ENCODE measurements at regions of chr11 and their contacts with region 1.

Region 1: DNA sequence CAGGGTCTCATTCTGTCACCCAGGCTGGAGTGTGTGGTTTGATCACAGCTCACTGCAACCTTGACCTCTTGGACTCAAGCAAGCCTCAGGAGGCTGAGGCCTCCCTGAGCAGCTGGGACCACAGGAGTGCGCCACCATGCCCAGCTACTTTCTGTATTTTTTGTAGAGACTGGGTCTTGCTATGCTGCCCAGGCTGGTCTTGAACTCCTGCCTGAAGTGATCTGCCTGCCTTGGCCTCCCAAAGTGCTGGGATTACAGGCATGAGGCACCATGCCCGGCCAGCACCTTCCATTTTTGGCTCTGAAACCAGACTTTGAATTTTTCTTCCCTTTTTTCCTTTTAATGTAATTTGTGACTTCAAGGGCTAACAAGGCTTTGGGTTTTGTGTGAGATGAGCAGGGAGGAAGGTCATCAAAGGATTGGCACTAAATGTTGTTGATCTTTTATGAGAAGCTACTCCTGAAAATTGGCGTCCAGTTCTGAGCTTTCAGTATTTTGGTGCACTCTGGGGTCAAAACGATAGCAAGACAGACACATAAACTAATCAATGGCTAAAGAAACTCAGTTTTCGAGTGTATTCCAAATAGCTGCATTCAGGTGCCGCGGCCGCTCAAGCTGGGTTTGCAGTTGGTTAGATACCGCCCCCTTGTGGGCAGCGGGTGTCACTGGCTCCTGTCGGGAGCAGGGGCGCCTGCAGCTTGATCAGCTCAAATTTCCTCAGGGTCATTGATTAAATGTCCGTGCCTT is 51.9 kb upstream of the CLMP start:
- DNase-seq: peak; percentile 85
- H3K4me3 ChIP-seq: no peak overlapping the region
- H3K27ac ChIP-seq: no peak overlapping the region
- H3K4me1 ChIP-seq: peaks cover 27% of the 10 kb centered on the region
- CTCF ChIP-seq: peak; percentile 99

Region 2: DNA sequence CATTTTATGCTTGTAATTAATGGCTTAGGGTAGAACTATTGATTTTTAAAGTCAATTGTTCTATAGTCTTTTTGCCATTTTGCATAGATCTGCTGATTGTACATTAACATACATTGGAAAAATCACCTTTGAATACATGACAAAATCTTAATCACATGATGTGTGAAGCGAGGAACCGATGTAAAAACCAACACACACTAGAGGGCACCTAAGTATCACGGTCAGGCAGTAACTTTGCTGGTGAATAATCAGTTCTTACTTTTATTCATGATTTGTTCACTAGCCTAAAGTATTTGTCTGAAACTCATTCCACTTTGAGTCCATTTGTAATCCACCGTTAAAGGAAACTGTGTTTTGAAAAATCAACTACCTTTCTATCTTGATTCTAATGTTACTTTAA is 336.1 kb before region 1 on chr11:
- CTCF ChIA-PET with region 1: no interaction called
- POLR2A ChIA-PET with region 1: no interaction called
- intact Hi-C with region 1: no loop called
- DNase-seq: no peak
- H3K4me3 ChIP-seq: no peak overlapping the region
- H3K27ac ChIP-seq: no peak overlapping the region
- H3K4me1 ChIP-seq: no peaks in the 10 kb centered on the region
- CTCF ChIP-seq: peak; percentile 58

Region 3: DNA sequence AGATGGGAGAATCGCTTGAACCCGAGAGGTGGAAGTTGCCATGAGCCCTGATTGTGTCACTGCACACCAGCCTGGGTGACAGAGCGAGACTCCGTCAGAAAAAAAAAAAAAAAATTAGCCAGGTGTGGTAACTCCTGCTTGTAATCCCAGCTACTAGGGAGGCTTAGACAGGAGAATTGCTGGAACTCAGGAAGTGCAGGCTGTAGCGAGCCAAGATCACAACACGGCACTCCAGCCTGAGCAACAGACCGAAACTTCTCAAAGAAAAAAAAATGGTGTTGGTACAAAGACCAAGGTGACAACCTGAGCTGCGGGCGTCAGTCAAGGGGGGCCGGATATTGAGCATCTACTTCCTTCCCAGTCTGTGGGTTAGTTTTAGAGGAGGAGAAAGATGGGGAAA is 136.6 kb before region 1 on chr11:
- CTCF ChIA-PET with region 1: interaction called, 3 read pairs
- POLR2A ChIA-PET with region 1: no interaction called
- intact Hi-C with region 1: loop called (anchors 1 kb)
- DNase-seq: no peak
- H3K4me3 ChIP-seq: no peak overlapping the region
- H3K27ac ChIP-seq: no peak overlapping the region
- H3K4me1 ChIP-seq: no peaks in the 10 kb centered on the region
- CTCF ChIP-seq: no peak